T-cell (primary cell): ENCODE measurements at regions of chr3 and their contacts with region 1.

Region 1: DNA sequence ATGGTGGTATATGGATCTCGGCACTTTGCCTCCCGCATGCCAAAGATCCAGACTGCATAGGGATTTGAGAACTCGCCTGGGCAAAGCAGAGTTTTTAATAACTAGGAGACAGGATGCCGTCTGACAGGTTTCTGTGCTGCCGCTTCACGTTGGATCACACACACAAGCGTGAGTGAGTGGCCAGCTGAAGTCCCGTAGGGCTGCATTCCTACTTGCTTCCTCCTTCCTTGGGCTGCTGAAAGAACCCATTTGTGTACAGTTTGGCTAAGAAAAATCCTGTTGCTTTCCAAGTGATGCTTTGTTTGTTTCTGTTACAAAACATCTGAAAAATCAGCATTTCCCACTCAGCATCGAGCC is 604.3 kb upstream of the CFAP20DC start:
- DNase-seq: no peak
- ATAC-seq: no peak
- H3K4me3 ChIP-seq: no peak overlapping the region
- H3K4me3 Mint-ChIP-seq: no peak overlapping the region
- H3K27ac ChIP-seq: no peak overlapping the region
- H3K27ac Mint-ChIP-seq: no peak overlapping the region
- H3K4me1 ChIP-seq: no peaks in the 10 kb centered on the region
- H3K4me1 Mint-ChIP-seq: no peaks in the 10 kb centered on the region
- H3K27me3 ChIP-seq: no peaks in the 10 kb centered on the region
- H3K27me3 Mint-ChIP-seq: no peaks in the 10 kb centered on the region

Region 2: DNA sequence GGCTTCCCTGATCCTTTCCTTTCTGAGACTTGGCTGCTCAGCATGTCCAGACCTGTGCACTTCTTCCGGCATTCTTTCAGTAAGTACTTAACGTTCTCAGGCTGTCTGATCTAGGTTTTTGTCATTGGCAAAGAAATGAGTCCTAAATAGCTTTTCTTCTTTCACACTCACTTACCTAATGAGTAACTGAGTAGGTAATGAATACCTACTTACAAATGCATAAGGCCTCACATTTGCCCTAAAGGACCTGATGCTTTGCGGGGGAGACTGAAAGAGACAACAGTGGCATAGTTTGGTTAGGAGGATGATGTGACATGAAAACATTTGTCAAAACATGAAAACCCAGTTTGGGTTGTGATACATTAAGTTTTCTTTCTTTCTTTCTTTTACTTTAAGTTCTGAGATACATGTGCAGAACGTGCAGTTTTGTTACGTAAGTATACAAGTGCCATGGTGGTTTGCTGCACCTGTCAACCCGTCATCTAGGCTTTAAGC is 87.6 kb before region 1 on chr3:
- CTCF ChIA-PET with region 1: no interaction called
- POLR2A ChIA-PET with region 1: no interaction called
- DNase-seq: no peak
- ATAC-seq: no peak
- H3K4me3 ChIP-seq: no peak overlapping the region
- H3K4me3 Mint-ChIP-seq: no peak overlapping the region
- H3K27ac ChIP-seq: no peak overlapping the region
- H3K27ac Mint-ChIP-seq: no peak overlapping the region
- H3K4me1 ChIP-seq: no peaks in the 10 kb centered on the region
- H3K4me1 Mint-ChIP-seq: peaks cover 4 to 11% (median 8%) of the 10 kb centered on the region in 3 donors
- H3K27me3 ChIP-seq: no peaks in the 10 kb centered on the region
- H3K27me3 Mint-ChIP-seq: peaks cover 3 to 4% of the 10 kb centered on the region in 2 donors

Region 3: DNA sequence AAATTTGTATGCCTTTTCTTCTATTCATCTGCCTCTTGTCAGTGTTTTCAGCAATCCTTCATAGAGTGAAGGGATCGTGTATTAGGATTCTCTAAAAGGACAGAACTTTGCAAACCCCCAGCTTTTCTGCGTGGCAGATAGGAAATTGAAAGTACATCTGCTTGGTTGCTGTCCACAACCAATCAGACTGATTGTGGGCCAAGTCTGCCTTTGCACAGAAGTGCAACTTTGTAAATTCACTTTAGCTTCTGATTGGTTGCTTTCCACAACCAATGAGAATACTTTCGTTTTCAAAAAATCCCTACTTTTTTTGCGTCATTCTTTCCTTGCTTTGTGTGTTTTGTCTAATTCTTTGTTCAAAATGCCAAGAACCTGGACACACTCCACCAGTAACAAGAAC is 749.8 kb after region 1 on chr3:
- CTCF ChIA-PET with region 1: no interaction called
- POLR2A ChIA-PET with region 1: interaction called in 1 of 2 experiments, 11 read pairs
- DNase-seq: no peak
- ATAC-seq: no peak
- H3K4me3 ChIP-seq: no peak overlapping the region
- H3K4me3 Mint-ChIP-seq: no peak overlapping the region
- H3K27ac ChIP-seq: no peak overlapping the region
- H3K27ac Mint-ChIP-seq: no peak overlapping the region
- H3K4me1 ChIP-seq: no peaks in the 10 kb centered on the region
- H3K4me1 Mint-ChIP-seq: peaks cover 0 to 7% (median 0%) of the 10 kb centered on the region in 3 donors
- H3K27me3 ChIP-seq: no peaks in the 10 kb centered on the region
- H3K27me3 Mint-ChIP-seq: no peaks in the 10 kb centered on the region